CD4-positive, alpha-beta memory T cell (primary cell): ENCODE measurements at regions of chr5 and their contacts with region 1.

Region 1: GRCh38 chr5:140145818-140146522 is 20.2 kb downstream of the IGIP start:
- DNase-seq: peak in 4 of 5 donors; percentile 46 to 51 (median 47)
- H3K4me3 ChIP-seq: no peak overlapping the region
- H3K4me3 Mint-ChIP-seq: peak overlapping the region in 7 of 8 donors; percentile 36 to 84 (median 73)
- H3K27ac ChIP-seq: no peak overlapping the region
- H3K27ac Mint-ChIP-seq: no peak overlapping the region
- H3K4me1 ChIP-seq: peaks cover 12% of the 10 kb centered on the region
- H3K4me1 Mint-ChIP-seq: peaks cover 12 to 38% (median 22%) of the 10 kb centered on the region in 4 donors
- H3K27me3 ChIP-seq: peaks cover 7% of the 10 kb centered on the region
- H3K27me3 Mint-ChIP-seq: peaks cover 4 to 12% of the 10 kb centered on the region in 2 donors

Region 2: DNA sequence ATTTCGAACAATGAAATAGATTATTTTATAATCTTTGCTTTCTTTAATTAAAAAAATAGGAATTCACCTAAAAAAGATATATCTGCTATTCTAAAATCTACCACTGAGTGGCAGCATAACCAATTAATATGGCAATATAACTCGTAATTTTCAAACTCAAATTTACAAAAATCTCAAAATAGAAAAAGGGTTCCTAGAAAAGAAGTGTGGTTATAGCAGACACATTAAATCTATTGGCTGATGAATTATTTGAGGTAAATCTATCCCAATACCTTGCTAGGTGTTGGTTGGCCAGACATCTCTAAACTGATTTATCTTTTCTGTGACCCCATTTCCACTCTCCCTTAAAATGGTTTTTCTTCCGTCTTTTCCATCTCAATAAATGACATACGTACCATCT is 72.7 kb before region 1 on chr5:
- CTCF ChIA-PET with region 1: interaction called, 257 read pairs
- POLR2A ChIA-PET with region 1: no interaction called
- intact Hi-C with region 1: loop called (anchors 1 kb)
- DNase-seq: peak in 4 of 5 donors; percentile 41 to 53 (median 50)
- H3K4me3 ChIP-seq: no peak overlapping the region
- H3K4me3 Mint-ChIP-seq: no peak overlapping the region
- H3K27ac ChIP-seq: no peak overlapping the region
- H3K27ac Mint-ChIP-seq: no peak overlapping the region
- H3K4me1 ChIP-seq: no peaks in the 10 kb centered on the region
- H3K4me1 Mint-ChIP-seq: no peaks in the 10 kb centered on the region
- H3K27me3 ChIP-seq: peaks cover 7% of the 10 kb centered on the region
- H3K27me3 Mint-ChIP-seq: peaks cover 8 to 13% of the 10 kb centered on the region in 2 donors

Region 3: GRCh38 chr5:140081030-140081429 is 64.9 kb before region 1 on chr5:
- CTCF ChIA-PET with region 1: interaction called, 257 read pairs
- POLR2A ChIA-PET with region 1: no interaction called
- intact Hi-C with region 1: no loop called
- DNase-seq: no peak
- H3K4me3 ChIP-seq: no peak overlapping the region
- H3K4me3 Mint-ChIP-seq: no peak overlapping the region
- H3K27ac ChIP-seq: no peak overlapping the region
- H3K27ac Mint-ChIP-seq: no peak overlapping the region
- H3K4me1 ChIP-seq: no peaks in the 10 kb centered on the region
- H3K4me1 Mint-ChIP-seq: no peaks in the 10 kb centered on the region
- H3K27me3 ChIP-seq: no peaks in the 10 kb centered on the region
- H3K27me3 Mint-ChIP-seq: peaks cover 22 to 23% of the 10 kb centered on the region in 2 donors

Region 4: DNA sequence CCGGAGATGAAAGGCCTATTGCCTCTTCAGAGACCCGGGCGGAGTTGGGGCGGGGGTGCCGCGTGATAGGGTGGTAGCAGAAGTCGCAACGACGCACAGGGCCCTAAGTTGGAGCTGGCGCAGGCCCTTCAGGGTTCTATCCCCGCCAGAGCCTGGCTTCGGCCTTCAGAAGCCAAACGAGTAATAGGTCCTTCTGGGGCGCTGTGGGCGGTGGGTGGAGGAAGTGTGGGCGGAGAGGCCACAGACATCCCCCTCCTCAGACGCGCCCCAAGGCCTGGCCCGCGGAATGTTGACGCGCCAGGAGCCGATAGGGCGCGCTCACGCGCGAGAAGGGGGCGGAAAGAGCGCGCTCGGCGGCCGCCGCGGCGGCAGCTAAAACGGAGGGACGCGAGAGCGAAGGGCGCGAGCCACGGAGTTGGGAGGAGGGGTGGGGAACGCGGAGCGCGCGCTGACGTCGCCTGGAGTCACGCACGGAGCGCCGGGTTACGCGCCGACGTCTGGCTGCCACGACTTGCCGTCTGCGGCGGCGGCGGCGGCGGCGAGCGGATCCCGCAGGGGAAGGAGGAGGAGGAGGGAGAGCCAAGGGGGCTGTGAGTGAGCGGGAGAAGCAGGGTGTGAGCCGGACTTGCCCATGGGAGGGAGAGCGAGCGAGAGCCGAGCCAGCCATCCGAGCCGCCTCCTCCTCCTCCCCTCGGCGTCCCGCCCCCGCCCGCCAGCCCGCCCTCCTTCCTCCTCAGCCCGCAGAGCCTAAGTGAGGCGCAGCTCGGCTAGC is 38.5 kb before region 1 on chr5:
- CTCF ChIA-PET with region 1: interaction called, 148 read pairs
- POLR2A ChIA-PET with region 1: interaction called, 21 read pairs
- intact Hi-C with region 1: loop called (anchors 1 kb)
- DNase-seq: peak; percentile 95 to 96 (median 95)
- H3K4me3 ChIP-seq: peak overlapping the region; percentile 77 to 88
- H3K4me3 Mint-ChIP-seq: peak overlapping the region; percentile 92 to 100 (median 97)
- H3K27ac ChIP-seq: peak overlapping the region; percentile 94
- H3K27ac Mint-ChIP-seq: peak overlapping the region; percentile 97 to 100 (median 99)
- H3K4me1 ChIP-seq: peaks cover 47% of the 10 kb centered on the region
- H3K4me1 Mint-ChIP-seq: peaks cover 19 to 51% (median 39%) of the 10 kb centered on the region in 4 donors
- H3K27me3 ChIP-seq: no peaks in the 10 kb centered on the region
- H3K27me3 Mint-ChIP-seq: no peaks in the 10 kb centered on the region

Region 5: GRCh38 chr5:140113699-140114263 is 32.2 kb before region 1 on chr5 and contains the start of gene PURA:
- CTCF ChIA-PET with region 1: interaction called, 148 read pairs
- POLR2A ChIA-PET with region 1: interaction called, 21 read pairs
- intact Hi-C with region 1: loop called (anchors 1 kb)
- DNase-seq: peak; percentile 97 to 98 (median 98)
- H3K4me3 ChIP-seq: peak within 1 kb of the TSS; percentile 76 to 88
- H3K4me3 Mint-ChIP-seq: peak within 1 kb of the TSS; percentile 94 to 100 (median 96)
- H3K27ac ChIP-seq: peak within 1 kb of the TSS; percentile 80
- H3K27ac Mint-ChIP-seq: peak within 1 kb of the TSS; percentile 93 to 98 (median 97)
- H3K4me1 ChIP-seq: peaks cover 79% of the 10 kb centered on the region
- H3K4me1 Mint-ChIP-seq: peaks cover 43 to 81% (median 67%) of the 10 kb centered on the region in 4 donors
- H3K27me3 ChIP-seq: no peaks in the 10 kb centered on the region
- H3K27me3 Mint-ChIP-seq: no peaks in the 10 kb centered on the region
- total RNA-seq, gene PURA: 31.2 to 36.2 TPM

Region 6: DNA sequence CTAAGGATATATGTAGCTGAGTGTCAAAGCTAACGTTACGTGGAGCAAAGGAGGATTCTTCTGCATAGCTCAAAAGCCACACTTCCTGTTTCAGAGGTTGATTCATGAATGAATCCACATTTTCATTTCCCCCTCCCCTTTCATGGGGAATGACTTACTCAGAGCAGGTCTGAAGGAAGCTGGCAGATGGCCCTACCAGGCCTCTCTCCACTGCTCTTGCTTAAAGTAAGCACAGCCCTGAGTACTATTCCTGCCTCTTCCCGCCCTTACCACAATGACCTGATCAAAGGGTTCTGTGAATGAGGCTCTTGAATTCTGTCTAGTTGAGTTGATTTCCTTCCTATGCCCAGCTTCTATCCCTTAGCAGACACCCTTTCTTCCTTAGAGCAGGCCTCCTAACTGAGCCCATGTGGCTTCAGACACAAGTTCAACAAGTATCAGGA is 14.0 kb before region 1 on chr5:
- CTCF ChIA-PET with region 1: interaction called, 30 read pairs
- POLR2A ChIA-PET with region 1: no interaction called
- intact Hi-C with region 1: no loop called
- DNase-seq: peak in 1 of 5 donors; percentile 11
- H3K4me3 ChIP-seq: no peak overlapping the region
- H3K4me3 Mint-ChIP-seq: peak overlapping the region in 5 of 8 donors; percentile 5 to 54 (median 25)
- H3K27ac ChIP-seq: no peak overlapping the region
- H3K27ac Mint-ChIP-seq: peak overlapping the region in 4 of 7 donors; percentile 32 to 37 (median 36)
- H3K4me1 ChIP-seq: peaks cover 16% of the 10 kb centered on the region
- H3K4me1 Mint-ChIP-seq: peaks cover 25 to 49% (median 35%) of the 10 kb centered on the region in 4 donors
- H3K27me3 ChIP-seq: no peaks in the 10 kb centered on the region
- H3K27me3 Mint-ChIP-seq: no peaks in the 10 kb centered on the region

Region 7: DNA sequence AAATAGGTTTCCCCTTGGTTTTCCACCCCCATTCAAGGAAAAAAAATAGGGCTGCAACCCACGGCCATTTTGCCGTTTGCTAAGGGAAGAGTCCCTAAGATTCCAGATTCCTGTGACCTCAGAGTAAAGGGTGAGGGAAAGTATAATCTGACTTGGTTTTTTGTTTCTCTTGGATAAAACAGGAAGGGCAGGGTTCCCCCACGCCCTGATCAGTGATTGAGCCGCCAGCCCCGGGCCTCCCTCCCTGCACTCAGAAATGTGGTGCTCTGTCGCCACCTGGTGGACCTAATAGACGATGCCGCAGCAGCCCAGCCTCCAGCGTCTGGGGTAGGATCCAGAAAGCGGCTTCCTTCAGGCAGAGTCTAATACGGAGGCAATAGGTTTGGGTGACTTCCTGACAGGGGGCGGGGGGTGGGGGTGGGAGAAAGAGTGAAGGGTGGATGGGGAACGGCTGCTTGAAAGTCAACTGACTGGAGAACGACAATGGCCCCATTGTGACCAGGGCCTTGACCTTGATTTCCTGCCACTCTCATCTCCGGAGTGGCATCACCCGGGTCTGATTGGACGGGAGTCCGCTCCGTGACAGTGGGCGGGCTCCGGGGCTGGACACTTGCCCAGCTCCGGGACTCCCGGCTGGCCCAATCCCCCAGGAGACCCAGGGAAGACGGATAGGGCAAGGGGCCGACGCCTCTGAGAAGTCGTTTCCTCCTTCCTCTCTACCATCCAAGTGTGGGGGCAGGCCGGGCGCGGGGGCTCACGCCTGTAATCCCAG is 11.2 kb after region 1 on chr5:
- CTCF ChIA-PET with region 1: interaction called, 132 read pairs
- POLR2A ChIA-PET with region 1: interaction called, 4 read pairs
- intact Hi-C with region 1: loop called (anchors 1 kb)
- DNase-seq: peak; percentile 77 to 82 (median 82)
- H3K4me3 ChIP-seq: no peak overlapping the region
- H3K4me3 Mint-ChIP-seq: peak overlapping the region; percentile 52 to 79 (median 60)
- H3K27ac ChIP-seq: no peak overlapping the region
- H3K27ac Mint-ChIP-seq: peak overlapping the region in 6 of 7 donors; percentile 19 to 88 (median 30)
- H3K4me1 ChIP-seq: peaks cover 11% of the 10 kb centered on the region
- H3K4me1 Mint-ChIP-seq: peaks cover 2 to 15% (median 9%) of the 10 kb centered on the region in 4 donors
- H3K27me3 ChIP-seq: no peaks in the 10 kb centered on the region
- H3K27me3 Mint-ChIP-seq: no peaks in the 10 kb centered on the region

Region 8: DNA sequence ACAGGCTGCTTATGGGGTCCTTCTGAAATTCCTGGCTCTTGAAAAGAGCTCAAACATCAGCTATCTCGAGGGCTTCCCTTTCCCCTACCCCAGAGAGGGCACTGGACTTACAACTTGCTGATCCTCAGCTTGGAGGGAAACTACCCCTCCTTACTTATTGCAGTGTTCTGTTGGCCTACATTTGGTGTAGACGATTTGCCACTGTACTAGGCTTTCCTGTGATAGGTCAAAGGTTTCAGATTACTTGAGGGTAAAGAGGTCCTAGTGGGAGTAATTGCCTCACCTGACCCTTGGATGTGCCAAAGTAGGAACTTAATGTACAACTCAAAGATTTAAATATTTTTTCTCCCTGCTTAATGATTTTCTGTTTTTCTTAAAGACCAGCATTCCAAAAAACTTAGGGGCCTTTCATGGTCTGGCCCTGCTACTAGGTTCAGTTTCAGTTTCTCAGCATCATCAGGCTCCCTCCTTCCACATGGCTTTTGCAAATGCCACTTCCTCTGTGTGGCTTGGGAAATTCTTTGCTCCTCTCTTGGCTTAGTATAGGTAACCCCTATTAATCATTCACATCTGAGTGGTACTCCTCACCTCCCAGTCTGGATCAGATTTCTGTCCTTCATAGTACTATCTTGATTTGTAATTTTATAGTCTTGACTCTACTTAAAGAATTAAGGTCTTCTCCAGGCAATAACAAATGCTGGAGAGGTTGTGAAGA is 61.4 kb after region 1 on chr5:
- CTCF ChIA-PET with region 1: no interaction called
- POLR2A ChIA-PET with region 1: no interaction called
- intact Hi-C with region 1: no loop called
- DNase-seq: no peak
- H3K4me3 ChIP-seq: no peak overlapping the region
- H3K4me3 Mint-ChIP-seq: no peak overlapping the region
- H3K27ac ChIP-seq: no peak overlapping the region
- H3K27ac Mint-ChIP-seq: no peak overlapping the region
- H3K4me1 ChIP-seq: no peaks in the 10 kb centered on the region
- H3K4me1 Mint-ChIP-seq: no peaks in the 10 kb centered on the region
- H3K27me3 ChIP-seq: no peaks in the 10 kb centered on the region
- H3K27me3 Mint-ChIP-seq: no peaks in the 10 kb centered on the region

Region 9: GRCh38 chr5:140821375-140822280 is 675.7 kb after region 1 on chr5 and contains the start of gene PCDHA5:
- CTCF ChIA-PET with region 1: no interaction called
- POLR2A ChIA-PET with region 1: no interaction called
- intact Hi-C with region 1: no loop called
- DNase-seq: no peak
- H3K4me3 ChIP-seq: no peak within 1 kb of the TSS
- H3K4me3 Mint-ChIP-seq: no peak within 1 kb of the TSS
- H3K27ac ChIP-seq: no peak within 1 kb of the TSS
- H3K27ac Mint-ChIP-seq: no peak within 1 kb of the TSS
- H3K4me1 ChIP-seq: no peaks in the 10 kb centered on the region
- H3K4me1 Mint-ChIP-seq: no peaks in the 10 kb centered on the region
- H3K27me3 ChIP-seq: no peaks in the 10 kb centered on the region
- H3K27me3 Mint-ChIP-seq: peaks cover 2 to 5% of the 10 kb centered on the region in 2 donors
- total RNA-seq, gene PCDHA5: not detected